ENCODE measurements at regions of chr4 and their contacts with region 1.

Region 1: GRCh38 chr4:147418226-147418625 is 62.7 kb upstream of the EDNRA start:
- DNase-seq: no peak
- ATAC-seq: no peak
- H3K4me3 ChIP-seq: no peak overlapping the region
- H3K27ac ChIP-seq: no peak overlapping the region
- H3K4me1 ChIP-seq: no peaks in the 10 kb centered on the region
- H3K27me3 ChIP-seq: no peaks in the 10 kb centered on the region
- CTCF ChIP-seq: no peak
- EP300 ChIP-seq: no peak
- POLR2A ChIP-seq: no peak
- RAD21 ChIP-seq: no peak

Region 2: GRCh38 chr4:147378779-147379178 is 39.4 kb before region 1 on chr4:
- CTCF ChIA-PET with region 1: no interaction called
- POLR2A ChIA-PET with region 1: no interaction called
- RAD21 ChIA-PET with region 1: no interaction called
- SMC1A ChIA-PET with region 1: no interaction called
- in situ Hi-C with region 1: no loop called
- intact Hi-C with region 1: no loop called
- DNase-seq: no peak
- ATAC-seq: no peak
- H3K4me3 ChIP-seq: no peak overlapping the region
- H3K27ac ChIP-seq: no peak overlapping the region
- H3K4me1 ChIP-seq: no peaks in the 10 kb centered on the region
- H3K27me3 ChIP-seq: no peaks in the 10 kb centered on the region; a peak in 1 of 4 replicates
- CTCF ChIP-seq: no peak
- EP300 ChIP-seq: no peak
- POLR2A ChIP-seq: no peak
- RAD21 ChIP-seq: no peak

Region 3: DNA sequence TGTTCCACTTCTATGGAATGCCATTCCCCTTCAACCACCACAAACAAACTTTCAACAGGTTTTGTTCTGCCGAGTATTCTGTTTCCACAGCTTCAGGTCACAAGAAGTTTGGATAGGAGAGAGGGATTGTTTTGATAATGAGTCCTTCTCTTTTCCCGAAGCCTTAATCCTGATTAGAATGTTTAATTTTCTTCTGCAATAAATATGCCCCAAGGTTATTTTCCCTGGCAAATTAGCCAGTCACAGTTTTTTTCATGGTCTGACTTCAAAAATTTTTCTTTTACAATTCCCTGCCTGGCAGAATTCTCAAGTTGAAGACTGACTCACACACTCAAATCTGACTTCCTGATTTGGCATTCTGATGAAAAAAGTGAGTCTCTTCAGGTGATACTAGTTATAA is 29.6 kb after region 1 on chr4:
- CTCF ChIA-PET with region 1: no interaction called
- POLR2A ChIA-PET with region 1: no interaction called
- RAD21 ChIA-PET with region 1: no interaction called
- SMC1A ChIA-PET with region 1: no interaction called
- in situ Hi-C with region 1: no loop called
- intact Hi-C with region 1: no loop called
- DNase-seq: no peak
- ATAC-seq: no peak
- H3K4me3 ChIP-seq: no peak overlapping the region
- H3K27ac ChIP-seq: no peak overlapping the region
- H3K4me1 ChIP-seq: no peaks in the 10 kb centered on the region
- H3K27me3 ChIP-seq: no peaks in the 10 kb centered on the region
- CTCF ChIP-seq: no peak
- EP300 ChIP-seq: no peak
- POLR2A ChIP-seq: no peak
- RAD21 ChIP-seq: no peak

Region 4: GRCh38 chr4:147749811-147750321 is 331.6 kb after region 1 on chr4:
- CTCF ChIA-PET with region 1: no interaction called
- POLR2A ChIA-PET with region 1: no interaction called
- RAD21 ChIA-PET with region 1: no interaction called
- SMC1A ChIA-PET with region 1: no interaction called
- in situ Hi-C with region 1: no loop called
- intact Hi-C with region 1: no loop called
- DNase-seq: peak; percentile 73
- ATAC-seq: peak; percentile 97
- H3K4me3 ChIP-seq: peak overlapping the region; percentile 39; the same call in 1 of the 2 replicates
- H3K27ac ChIP-seq: peak overlapping the region; percentile 52
- H3K4me1 ChIP-seq: peaks cover 17% of the 10 kb centered on the region
- H3K27me3 ChIP-seq: no peaks in the 10 kb centered on the region
- CTCF ChIP-seq: no peak
- EP300 ChIP-seq: peak; percentile 29 to 73; a peak in 2 of 4 replicates
- POLR2A ChIP-seq: no peak
- RAD21 ChIP-seq: no peak

Region 5: GRCh38 chr4:148420397-148420796 is 1002.2 kb after region 1 on chr4:
- CTCF ChIA-PET with region 1: no interaction called
- POLR2A ChIA-PET with region 1: no interaction called
- RAD21 ChIA-PET with region 1: no interaction called
- SMC1A ChIA-PET with region 1: no interaction called
- in situ Hi-C with region 1: no loop called
- intact Hi-C with region 1: loop called (anchors 5 kb)
- DNase-seq: no peak
- ATAC-seq: no peak
- H3K4me3 ChIP-seq: no peak overlapping the region
- H3K27ac ChIP-seq: no peak overlapping the region
- H3K4me1 ChIP-seq: no peaks in the 10 kb centered on the region
- H3K27me3 ChIP-seq: no peaks in the 10 kb centered on the region
- CTCF ChIP-seq: no peak
- EP300 ChIP-seq: no peak
- POLR2A ChIP-seq: no peak
- RAD21 ChIP-seq: no peak